CD8-positive, alpha-beta memory T cell (primary cell): ENCODE measurements at regions of chr14 and their contacts with region 1.

Region 1: DNA sequence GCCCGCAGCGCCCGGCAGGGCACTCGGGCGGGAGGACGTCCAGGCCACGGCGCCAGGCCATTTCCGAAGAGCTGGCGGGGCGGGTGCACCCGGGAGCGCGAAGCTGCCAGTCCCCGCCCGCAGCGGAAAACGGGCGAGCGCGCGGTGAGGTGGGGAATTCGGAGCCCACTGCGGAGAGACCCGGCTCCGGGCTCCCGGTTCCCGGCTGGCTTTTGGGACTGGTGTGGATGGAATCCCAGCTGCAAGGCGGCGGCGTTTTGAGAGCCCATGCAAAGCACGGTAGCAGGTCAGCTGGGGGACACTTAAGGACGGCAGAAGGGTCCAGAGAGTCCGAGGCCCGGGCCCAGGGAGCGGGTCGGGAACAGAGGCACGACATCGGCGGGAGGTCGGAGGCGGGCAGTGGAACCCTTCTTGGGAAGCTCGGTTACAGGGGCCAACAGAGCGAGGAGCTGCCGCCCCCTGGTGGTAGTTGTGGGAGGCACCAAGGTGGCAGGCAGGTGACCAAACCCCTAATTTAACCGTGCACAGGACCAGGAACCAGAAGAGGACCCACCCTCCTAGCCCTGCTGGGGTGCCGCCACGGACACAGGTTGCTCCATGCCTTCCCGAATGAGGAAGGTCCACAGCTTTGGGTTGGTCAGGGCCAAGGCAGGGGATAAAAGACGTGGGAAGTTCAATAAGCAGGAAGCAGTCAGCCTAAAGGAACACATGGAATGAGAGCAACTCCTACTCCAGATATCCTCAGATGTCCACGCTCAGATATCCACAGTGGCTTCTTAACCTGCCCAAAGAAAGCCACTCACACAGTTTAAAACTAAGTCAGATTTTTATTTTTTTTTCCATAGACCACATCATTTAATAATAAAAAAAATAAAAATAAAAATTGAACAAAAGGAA is 685 bp upstream of the CDH24 start:
- DNase-seq: peak; percentile 74 to 90 (median 81)
- H3K4me3 ChIP-seq: peak overlapping the region; percentile 74
- H3K4me3 Mint-ChIP-seq: peak overlapping the region; percentile 85 to 95 (median 90)
- H3K27ac ChIP-seq: no peak overlapping the region
- H3K27ac Mint-ChIP-seq: peak overlapping the region in 7 of 8 donors; percentile 37 to 92 (median 66)
- H3K4me1 ChIP-seq: peaks cover 14% of the 10 kb centered on the region
- H3K4me1 Mint-ChIP-seq: peaks cover 16 to 19% (median 18%) of the 10 kb centered on the region in 3 donors
- H3K27me3 ChIP-seq: no peaks in the 10 kb centered on the region
- H3K27me3 Mint-ChIP-seq: no peaks in the 10 kb centered on the region

Region 2: GRCh38 chr14:22737052-22737451 is 321.0 kb before region 1 on chr14:
- CTCF ChIA-PET with region 1: no interaction called
- POLR2A ChIA-PET with region 1: no interaction called
- DNase-seq: no peak
- H3K4me3 ChIP-seq: no peak overlapping the region
- H3K4me3 Mint-ChIP-seq: no peak overlapping the region
- H3K27ac ChIP-seq: no peak overlapping the region
- H3K27ac Mint-ChIP-seq: no peak overlapping the region
- H3K4me1 ChIP-seq: no peaks in the 10 kb centered on the region
- H3K4me1 Mint-ChIP-seq: no peaks in the 10 kb centered on the region
- H3K27me3 ChIP-seq: no peaks in the 10 kb centered on the region
- H3K27me3 Mint-ChIP-seq: peaks cover 2 to 18% of the 10 kb centered on the region in 2 donors

Region 3: GRCh38 chr14:22898372-22899090 is 159.5 kb before region 1 on chr14:
- CTCF ChIA-PET with region 1: no interaction called
- POLR2A ChIA-PET with region 1: no interaction called
- DNase-seq: no peak
- H3K4me3 ChIP-seq: no peak overlapping the region
- H3K4me3 Mint-ChIP-seq: no peak overlapping the region
- H3K27ac ChIP-seq: peak overlapping the region; percentile 26
- H3K27ac Mint-ChIP-seq: peak overlapping the region in 2 of 8 donors; percentile 40 to 46
- H3K4me1 ChIP-seq: peaks cover 7% of the 10 kb centered on the region
- H3K4me1 Mint-ChIP-seq: peaks cover 5 to 10% (median 5%) of the 10 kb centered on the region in 3 donors
- H3K27me3 ChIP-seq: no peaks in the 10 kb centered on the region
- H3K27me3 Mint-ChIP-seq: no peaks in the 10 kb centered on the region

Region 4: DNA sequence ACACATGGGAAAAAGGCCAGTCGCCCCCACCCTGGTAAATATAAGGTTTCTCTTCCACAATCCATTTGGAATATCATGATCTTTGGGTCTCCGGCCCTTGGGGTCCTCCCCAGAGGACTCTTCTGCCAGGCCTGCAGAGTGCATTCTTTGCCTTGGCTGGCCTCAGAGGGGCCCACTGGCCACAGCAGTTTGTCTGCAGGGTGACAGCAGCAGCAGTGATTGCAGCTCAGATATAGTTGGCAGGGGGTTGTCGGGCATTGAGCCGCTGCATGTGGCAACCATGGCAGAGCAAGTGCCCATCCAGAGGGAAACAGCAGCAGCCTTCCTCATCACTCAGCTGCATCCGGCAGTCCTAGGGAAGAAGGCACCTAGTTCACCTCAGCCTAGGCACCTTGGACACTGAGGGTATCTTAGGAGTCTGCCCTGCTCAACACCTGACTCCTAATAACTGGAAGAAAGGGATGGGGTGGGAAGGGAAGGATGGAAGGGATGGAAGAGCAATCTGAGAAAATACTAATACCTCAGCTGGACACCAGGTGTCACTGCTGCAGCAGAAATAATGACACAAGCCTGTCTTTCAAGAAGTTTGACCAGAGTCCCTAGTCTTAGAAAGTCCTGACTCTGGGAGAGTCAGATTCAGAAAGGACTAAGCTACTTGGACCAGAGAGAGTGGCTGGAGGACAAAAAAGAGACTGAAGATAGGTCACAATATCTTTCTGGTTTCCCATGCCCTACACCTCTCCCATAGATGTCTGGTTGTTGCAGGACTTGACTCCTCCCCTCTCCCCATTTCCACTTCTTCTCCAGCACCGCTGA is 84.6 kb before region 1 on chr14:
- CTCF ChIA-PET with region 1: interaction called, 732 read pairs
- POLR2A ChIA-PET with region 1: no interaction called
- DNase-seq: peak in 3 of 5 donors; percentile 27 to 53 (median 34)
- H3K4me3 ChIP-seq: no peak overlapping the region
- H3K4me3 Mint-ChIP-seq: peak overlapping the region in 1 of 7 donors; percentile 32
- H3K27ac ChIP-seq: no peak overlapping the region
- H3K27ac Mint-ChIP-seq: peak overlapping the region in 1 of 8 donors; percentile 31
- H3K4me1 ChIP-seq: no peaks in the 10 kb centered on the region
- H3K4me1 Mint-ChIP-seq: no peaks in the 10 kb centered on the region
- H3K27me3 ChIP-seq: peaks cover 4% of the 10 kb centered on the region
- H3K27me3 Mint-ChIP-seq: peaks cover 3 to 9% of the 10 kb centered on the region in 2 donors

Region 5: GRCh38 chr14:22986508-22987054 is 71.4 kb before region 1 on chr14:
- CTCF ChIA-PET with region 1: interaction called, 732 read pairs
- POLR2A ChIA-PET with region 1: interaction called, 14 read pairs
- DNase-seq: peak; percentile 75 to 89 (median 79)
- H3K4me3 ChIP-seq: no peak overlapping the region
- H3K4me3 Mint-ChIP-seq: peak overlapping the region in 1 of 7 donors; percentile 60
- H3K27ac ChIP-seq: no peak overlapping the region
- H3K27ac Mint-ChIP-seq: peak overlapping the region in 2 of 8 donors; percentile 12 to 29
- H3K4me1 ChIP-seq: peaks cover 7% of the 10 kb centered on the region
- H3K4me1 Mint-ChIP-seq: no peaks in the 10 kb centered on the region
- H3K27me3 ChIP-seq: no peaks in the 10 kb centered on the region
- H3K27me3 Mint-ChIP-seq: no peaks in the 10 kb centered on the region

Region 6: DNA sequence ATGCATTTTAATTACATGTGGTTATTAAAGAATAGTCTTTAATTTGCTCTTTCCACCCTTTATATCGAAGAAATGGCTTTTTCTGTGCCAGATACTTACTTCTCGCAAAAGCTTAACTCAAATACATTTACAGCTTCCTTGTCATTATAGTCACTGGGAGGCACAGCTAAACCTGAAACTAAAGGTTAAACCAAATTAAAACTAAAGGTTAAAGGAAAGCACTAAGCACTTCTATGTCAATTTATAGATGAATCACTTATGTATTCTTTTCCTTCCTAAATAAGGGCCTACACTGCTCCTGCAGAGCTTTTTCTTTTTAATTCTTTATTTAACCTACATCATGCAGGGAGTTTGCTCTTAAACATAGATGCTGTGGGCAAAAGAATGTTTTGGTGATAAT is 57.1 kb before region 1 on chr14:
- CTCF ChIA-PET with region 1: interaction called, 732 read pairs
- POLR2A ChIA-PET with region 1: interaction called, 5 read pairs
- DNase-seq: no peak
- H3K4me3 ChIP-seq: no peak overlapping the region
- H3K4me3 Mint-ChIP-seq: no peak overlapping the region
- H3K27ac ChIP-seq: no peak overlapping the region
- H3K27ac Mint-ChIP-seq: no peak overlapping the region
- H3K4me1 ChIP-seq: peaks cover 5% of the 10 kb centered on the region
- H3K4me1 Mint-ChIP-seq: peaks cover 5 to 9% (median 8%) of the 10 kb centered on the region in 3 donors
- H3K27me3 ChIP-seq: no peaks in the 10 kb centered on the region
- H3K27me3 Mint-ChIP-seq: no peaks in the 10 kb centered on the region

Region 7: DNA sequence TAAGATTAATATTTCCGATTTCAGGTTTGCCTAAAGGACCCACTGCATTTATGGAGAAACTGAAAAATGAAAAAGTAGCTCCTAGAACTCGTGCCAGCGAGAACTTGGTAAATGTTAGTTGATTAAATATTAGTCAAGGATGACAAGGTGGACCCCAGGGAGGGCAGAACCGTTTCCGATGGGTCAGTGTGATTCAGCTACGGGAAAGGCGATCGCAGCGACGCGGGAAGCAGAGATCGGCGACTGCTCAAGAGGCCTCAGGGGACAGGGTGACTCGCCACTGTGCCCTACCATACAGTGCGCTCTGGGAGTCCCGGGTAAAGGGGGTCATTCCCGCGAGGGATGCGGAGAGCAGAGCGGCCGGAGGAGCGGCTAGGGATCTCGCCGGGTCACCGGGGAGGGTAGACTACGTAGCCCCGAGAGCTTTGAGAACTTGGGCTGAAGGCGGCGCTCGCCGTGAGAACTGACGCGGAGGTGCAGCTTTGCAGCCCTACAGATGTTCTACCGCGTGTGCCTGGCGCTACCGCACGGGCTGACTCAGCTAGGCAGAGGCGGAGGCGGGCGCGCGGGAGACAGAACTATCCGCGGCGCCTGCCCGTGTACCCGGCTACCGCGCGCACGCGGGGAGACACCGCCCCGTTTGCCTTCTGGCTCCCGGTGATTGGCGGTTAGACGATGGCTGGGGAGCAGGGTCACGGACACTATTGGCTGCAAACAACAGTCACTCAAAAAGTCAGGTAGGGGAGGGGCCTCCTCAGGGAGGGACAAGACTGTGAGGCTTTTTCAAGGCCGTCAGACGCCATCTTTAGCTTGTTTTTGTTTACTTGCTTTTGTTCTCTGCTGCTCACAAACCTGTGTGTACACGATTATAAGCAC is 51.2 kb before region 1 on chr14:
- CTCF ChIA-PET with region 1: interaction called, 53 read pairs
- POLR2A ChIA-PET with region 1: interaction called, 5 read pairs
- DNase-seq: peak; percentile 95 to 99 (median 98)
- H3K4me3 ChIP-seq: peak overlapping the region; percentile 68
- H3K4me3 Mint-ChIP-seq: peak overlapping the region; percentile 90 to 98 (median 97)
- H3K27ac ChIP-seq: peak overlapping the region; percentile 88
- H3K27ac Mint-ChIP-seq: peak overlapping the region; percentile 84 to 99 (median 98)
- H3K4me1 ChIP-seq: peaks cover 36% of the 10 kb centered on the region
- H3K4me1 Mint-ChIP-seq: peaks cover 40 to 56% (median 55%) of the 10 kb centered on the region in 3 donors
- H3K27me3 ChIP-seq: no peaks in the 10 kb centered on the region
- H3K27me3 Mint-ChIP-seq: no peaks in the 10 kb centered on the region

Region 8: DNA sequence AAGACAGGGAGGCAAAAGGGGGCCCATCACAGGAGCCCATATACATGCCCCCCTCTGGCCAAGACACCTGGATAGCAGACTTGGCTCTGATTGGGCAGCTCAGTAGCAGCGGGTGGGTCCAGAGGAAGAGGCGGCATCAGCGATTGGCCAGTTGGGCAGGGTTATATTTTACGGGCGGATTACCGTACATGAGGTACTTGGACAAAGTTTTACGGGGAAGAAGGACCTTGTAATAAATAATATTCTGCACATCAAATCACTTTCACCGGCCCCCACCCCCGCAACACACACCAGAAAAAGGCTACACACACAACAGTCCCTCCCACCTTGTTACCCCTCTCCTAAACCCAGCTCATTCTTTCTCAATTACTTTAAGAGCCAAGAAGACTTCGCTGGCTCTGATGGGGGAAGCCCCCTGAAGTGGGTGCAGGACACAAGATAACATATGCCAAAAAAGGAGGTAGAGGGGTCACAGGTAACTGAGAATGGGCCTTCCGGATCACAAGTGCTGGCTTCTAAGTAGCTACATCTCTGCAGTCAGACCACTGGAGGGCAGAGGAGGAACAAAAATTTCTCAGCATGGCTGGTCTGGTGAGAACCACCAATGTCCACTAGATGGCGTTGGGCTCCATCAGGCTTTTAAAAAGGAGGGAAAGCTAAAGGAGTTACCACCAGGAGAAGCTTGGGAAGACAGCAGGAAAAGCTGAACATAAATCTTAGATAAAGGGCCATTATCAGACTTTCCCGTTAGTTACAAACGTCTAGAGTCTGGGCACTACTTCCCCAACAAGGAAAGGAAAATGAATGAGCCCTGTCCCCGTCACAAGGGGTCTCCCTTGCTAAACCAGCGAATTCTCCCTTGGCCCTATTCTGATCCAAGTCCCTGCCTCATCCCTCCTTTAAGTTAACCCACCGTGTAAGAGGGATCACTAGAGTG is 10.7 kb after region 1 on chr14:
- CTCF ChIA-PET with region 1: interaction called, 50 read pairs
- POLR2A ChIA-PET with region 1: interaction called, 6 read pairs
- DNase-seq: peak; percentile 49 to 79 (median 72)
- H3K4me3 ChIP-seq: no peak overlapping the region
- H3K4me3 Mint-ChIP-seq: peak overlapping the region in 6 of 7 donors; percentile 10 to 72 (median 48)
- H3K27ac ChIP-seq: no peak overlapping the region
- H3K27ac Mint-ChIP-seq: peak overlapping the region; percentile 49 to 96 (median 72)
- H3K4me1 ChIP-seq: peaks cover 28% of the 10 kb centered on the region
- H3K4me1 Mint-ChIP-seq: peaks cover 37 to 50% (median 41%) of the 10 kb centered on the region in 3 donors
- H3K27me3 ChIP-seq: no peaks in the 10 kb centered on the region
- H3K27me3 Mint-ChIP-seq: no peaks in the 10 kb centered on the region

Region 9: DNA sequence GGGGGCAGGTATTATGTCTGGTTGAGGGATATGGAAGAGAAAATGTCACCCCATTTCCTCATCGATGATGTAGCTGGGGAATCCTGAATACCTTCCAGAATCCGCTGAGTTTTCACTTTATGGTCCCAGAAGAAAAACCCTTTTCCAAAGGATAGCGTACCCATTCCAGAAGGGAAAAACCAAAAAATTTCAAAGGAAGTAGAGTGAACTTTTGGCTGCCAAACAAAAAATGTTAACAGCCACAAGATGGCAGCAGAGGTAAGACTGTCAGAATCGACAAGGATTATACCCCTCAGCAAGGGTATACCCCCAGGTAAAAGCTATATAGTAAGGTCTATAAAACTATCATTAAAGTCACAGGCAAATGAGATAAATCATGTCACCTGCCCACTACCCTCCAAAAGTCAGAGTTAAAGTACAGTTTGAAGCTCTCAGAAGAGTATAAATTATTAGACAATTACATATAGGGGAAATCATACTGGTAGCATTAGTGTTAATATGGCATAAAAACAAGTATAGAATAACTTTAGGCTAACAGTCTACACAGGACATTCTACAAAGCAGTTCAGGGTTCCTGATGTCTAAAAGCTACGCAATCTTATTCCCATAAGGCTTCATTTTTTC is 18.9 kb after region 1 on chr14:
- CTCF ChIA-PET with region 1: interaction called, 21 read pairs
- POLR2A ChIA-PET with region 1: interaction called, 5 read pairs
- DNase-seq: peak in 2 of 5 donors; percentile 19 to 50
- H3K4me3 ChIP-seq: no peak overlapping the region
- H3K4me3 Mint-ChIP-seq: no peak overlapping the region
- H3K27ac ChIP-seq: no peak overlapping the region
- H3K27ac Mint-ChIP-seq: peak overlapping the region in 3 of 8 donors; percentile 7 to 29 (median 20)
- H3K4me1 ChIP-seq: peaks cover 9% of the 10 kb centered on the region
- H3K4me1 Mint-ChIP-seq: peaks cover 7 to 18% (median 13%) of the 10 kb centered on the region in 3 donors
- H3K27me3 ChIP-seq: no peaks in the 10 kb centered on the region
- H3K27me3 Mint-ChIP-seq: no peaks in the 10 kb centered on the region

Region 10: DNA sequence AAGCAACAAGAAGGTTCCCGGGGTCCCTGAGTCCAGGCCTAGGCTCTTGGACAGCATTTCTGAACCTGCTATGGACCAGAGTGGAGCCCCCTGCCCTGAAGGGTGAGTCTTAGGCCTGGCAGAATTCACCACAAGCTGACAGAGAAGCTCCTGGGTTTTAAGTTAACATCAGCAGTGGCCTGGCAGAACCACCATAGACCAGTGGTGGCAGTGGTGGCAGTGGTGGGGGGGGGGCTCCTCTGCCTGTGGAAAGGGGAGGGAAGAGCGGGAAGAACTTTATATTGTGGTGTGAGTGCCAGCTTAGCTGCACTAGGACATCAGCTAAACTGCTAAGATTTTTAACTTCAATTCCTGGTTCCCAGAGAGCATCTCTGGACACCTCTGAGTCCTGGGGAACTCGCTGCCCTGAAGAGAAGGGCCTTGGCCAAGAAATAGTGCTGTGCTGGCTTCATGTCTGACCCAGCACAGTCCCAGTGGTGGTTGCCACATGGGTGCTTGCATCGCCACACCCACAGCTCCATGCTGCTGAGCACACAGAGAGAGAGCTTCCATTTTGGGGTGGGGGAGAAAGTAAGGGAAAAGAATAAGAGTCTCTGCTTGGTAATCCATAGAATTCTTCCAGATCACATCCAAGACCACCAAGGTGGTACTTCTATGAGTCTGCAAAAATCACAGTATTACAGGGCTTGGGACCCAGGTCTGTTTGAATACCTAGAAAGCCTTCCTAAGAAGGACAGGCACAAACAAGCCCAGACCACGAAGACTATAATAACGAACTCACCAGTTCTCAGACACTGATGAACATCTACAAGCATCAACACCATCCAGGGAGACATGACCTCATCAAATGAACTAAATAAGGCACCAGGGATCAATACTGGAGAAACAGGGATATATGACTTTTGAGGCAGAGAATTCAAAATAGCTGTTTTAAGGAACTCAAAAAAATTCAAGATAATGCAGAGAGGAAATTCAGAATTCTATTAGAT is 159.3 kb after region 1 on chr14:
- CTCF ChIA-PET with region 1: no interaction called
- POLR2A ChIA-PET with region 1: no interaction called
- DNase-seq: no peak
- H3K4me3 ChIP-seq: no peak overlapping the region
- H3K4me3 Mint-ChIP-seq: no peak overlapping the region
- H3K27ac ChIP-seq: no peak overlapping the region
- H3K27ac Mint-ChIP-seq: no peak overlapping the region
- H3K4me1 ChIP-seq: no peaks in the 10 kb centered on the region
- H3K4me1 Mint-ChIP-seq: no peaks in the 10 kb centered on the region
- H3K27me3 ChIP-seq: no peaks in the 10 kb centered on the region
- H3K27me3 Mint-ChIP-seq: peaks cover 24 to 52% of the 10 kb centered on the region in 2 donors